ENCODE measurements at regions of chr4 and their contacts with region 1.

Region 1: DNA sequence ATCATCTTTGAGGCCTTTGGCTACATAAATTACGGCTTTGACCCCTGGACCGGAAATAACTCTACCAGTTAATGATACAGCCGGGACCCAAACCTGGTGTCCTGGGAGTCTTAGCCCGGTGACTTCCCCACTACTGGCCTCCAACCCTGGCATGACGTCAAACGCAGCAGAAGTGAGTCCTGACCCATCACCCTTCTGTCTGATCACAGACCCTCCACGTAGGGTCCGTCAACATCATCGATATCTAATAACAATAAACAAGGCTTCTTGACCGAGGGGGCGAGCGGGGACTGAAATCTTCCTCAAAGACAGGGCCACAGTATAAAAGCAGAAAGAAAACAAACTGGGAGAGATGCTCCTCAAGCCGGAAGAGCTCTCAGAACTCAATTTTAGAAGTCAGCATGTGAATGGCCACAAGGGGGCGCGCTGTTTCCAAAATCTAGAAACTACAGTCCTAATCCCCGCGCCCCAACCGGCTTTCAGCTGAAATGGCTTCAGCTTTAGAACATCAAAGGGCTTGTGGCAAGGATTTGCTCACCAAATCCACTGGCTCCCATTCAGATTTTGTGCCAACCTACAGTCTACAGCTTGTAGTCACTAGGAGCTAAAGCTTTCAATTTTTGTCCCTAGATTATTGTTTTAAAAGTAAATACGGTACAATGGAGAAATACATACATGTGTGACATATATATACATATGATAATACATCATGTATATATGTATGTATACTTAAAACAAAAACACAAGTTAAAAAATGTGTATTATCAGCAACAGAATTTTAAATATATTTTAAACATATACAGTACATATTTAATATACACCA is 46.4 kb upstream of the ENPP6 start:
- DNase-seq: peak; percentile 98
- ATAC-seq: peak; percentile 57
- H3K4me3 Mint-ChIP-seq: peak overlapping the region; percentile 2
- H3K27ac Mint-ChIP-seq: peak overlapping the region; percentile 41
- H3K4me1 Mint-ChIP-seq: peaks cover 47% of the 10 kb centered on the region
- H3K27me3 Mint-ChIP-seq: no peaks in the 10 kb centered on the region

Region 2: DNA sequence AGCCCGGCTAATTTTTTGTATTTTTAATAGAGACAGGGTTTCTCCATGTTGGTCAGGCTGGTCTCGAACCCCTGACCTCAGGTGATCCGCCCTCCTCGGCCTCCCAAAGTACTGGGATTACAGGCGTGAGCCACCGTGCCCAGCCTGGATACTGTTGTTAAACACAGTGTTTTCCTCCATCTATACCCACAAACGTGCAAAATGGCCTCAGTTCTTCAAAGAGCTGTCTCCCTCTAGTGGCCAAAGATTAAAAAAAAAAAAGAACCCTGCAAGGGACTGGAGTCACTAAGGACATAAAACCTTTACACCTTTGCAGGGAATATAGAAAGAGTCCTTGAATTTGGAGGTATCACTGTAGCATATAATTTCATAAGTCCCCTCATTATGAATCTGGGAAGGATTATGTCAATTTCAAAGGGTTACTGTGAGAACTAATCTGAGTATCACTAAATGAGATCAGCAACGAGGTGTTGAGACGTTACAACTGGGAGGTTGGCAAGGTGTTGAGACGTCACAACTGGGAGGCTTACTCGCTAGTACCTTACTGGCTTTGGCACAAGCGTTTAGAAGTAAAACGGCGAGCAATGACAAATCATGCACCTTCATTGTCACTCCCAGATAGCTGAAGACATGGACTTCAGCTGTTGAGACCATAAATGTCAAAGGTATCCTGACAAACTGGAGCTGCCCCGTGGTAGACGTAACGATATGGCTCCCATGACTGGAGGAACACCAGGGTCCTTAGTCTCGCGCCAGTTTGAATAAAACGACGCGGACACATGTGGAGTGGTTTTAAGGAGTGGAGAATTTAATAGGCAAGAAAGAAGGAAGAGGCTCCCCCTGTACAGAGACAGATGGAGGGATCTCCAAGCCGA is 13.1 kb before region 1 on chr4:
- CTCF ChIA-PET with region 1: interaction called, 41 read pairs
- POLR2A ChIA-PET with region 1: no interaction called
- intact Hi-C with region 1: no loop called
- DNase-seq: peak; percentile 36
- ATAC-seq: peak; percentile 80
- H3K4me3 Mint-ChIP-seq: no peak overlapping the region
- H3K27ac Mint-ChIP-seq: peak overlapping the region; percentile 53
- H3K4me1 Mint-ChIP-seq: peaks cover 14% of the 10 kb centered on the region
- H3K27me3 Mint-ChIP-seq: peaks cover 3% of the 10 kb centered on the region

Region 3: GRCh38 chr4:184310171-184310567 is 46.0 kb after region 1 on chr4:
- CTCF ChIA-PET with region 1: interaction called, 17 read pairs
- POLR2A ChIA-PET with region 1: no interaction called
- intact Hi-C with region 1: no loop called
- DNase-seq: peak; percentile 68
- ATAC-seq: peak; percentile 74
- H3K4me3 Mint-ChIP-seq: no peak overlapping the region
- H3K27ac Mint-ChIP-seq: peak overlapping the region; percentile 55
- H3K4me1 Mint-ChIP-seq: peaks cover 50% of the 10 kb centered on the region
- H3K27me3 Mint-ChIP-seq: no peaks in the 10 kb centered on the region

Region 4: DNA sequence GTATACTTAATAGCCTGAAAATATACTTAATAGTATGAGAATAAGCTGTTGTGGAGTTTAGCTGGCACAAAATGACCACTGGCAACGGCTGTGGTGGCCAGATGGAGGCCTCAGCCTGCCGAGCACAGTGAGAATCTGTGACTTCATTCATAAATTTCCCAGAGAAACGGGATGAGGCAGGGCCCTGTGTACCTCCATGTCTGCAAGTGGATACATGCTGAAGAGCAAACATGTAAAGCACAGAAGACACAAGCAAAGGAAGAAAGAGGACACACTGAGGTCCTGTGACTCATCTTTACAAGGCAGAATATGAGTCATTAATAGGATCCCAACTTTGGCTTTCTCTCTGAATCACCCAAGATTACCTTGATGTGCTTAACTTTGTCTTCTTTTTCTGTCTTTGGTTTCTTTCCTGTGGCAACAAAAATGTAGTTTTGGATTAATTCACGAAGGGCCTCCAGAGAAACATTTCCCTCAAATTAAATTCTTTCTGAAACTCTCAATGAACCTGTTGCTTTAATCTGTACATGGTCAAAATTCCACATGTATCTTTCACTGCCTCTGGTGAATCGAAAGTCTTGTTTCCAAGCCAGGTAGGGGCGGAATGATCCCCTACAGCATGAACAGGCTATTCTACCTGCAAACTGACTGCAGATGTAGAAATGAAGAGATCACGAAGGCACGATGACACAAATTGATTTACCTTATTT is 153.8 kb after region 1 on chr4:
- CTCF ChIA-PET with region 1: interaction called, 7 read pairs
- POLR2A ChIA-PET with region 1: interaction called, 3 read pairs
- intact Hi-C with region 1: loop called (anchors 1 kb)
- DNase-seq: peak; percentile 22
- ATAC-seq: peak; percentile 73
- H3K4me3 Mint-ChIP-seq: no peak overlapping the region
- H3K27ac Mint-ChIP-seq: peak overlapping the region; percentile 64
- H3K4me1 Mint-ChIP-seq: peaks cover 90% of the 10 kb centered on the region
- H3K27me3 Mint-ChIP-seq: no peaks in the 10 kb centered on the region

Region 5: GRCh38 chr4:184575306-184575705 is 311.2 kb after region 1 on chr4:
- CTCF ChIA-PET with region 1: interaction called, 5 read pairs
- POLR2A ChIA-PET with region 1: no interaction called
- intact Hi-C with region 1: loop called (anchors 2 to 5 kb)
- DNase-seq: no peak
- ATAC-seq: peak; percentile 67
- H3K4me3 Mint-ChIP-seq: no peak overlapping the region
- H3K27ac Mint-ChIP-seq: peak overlapping the region; percentile 47
- H3K4me1 Mint-ChIP-seq: peaks cover 22% of the 10 kb centered on the region
- H3K27me3 Mint-ChIP-seq: no peaks in the 10 kb centered on the region

Region 6: GRCh38 chr4:184635381-184635780 is 371.3 kb after region 1 on chr4:
- CTCF ChIA-PET with region 1: interaction called, 12 read pairs
- POLR2A ChIA-PET with region 1: no interaction called
- intact Hi-C with region 1: no loop called
- DNase-seq: no peak
- ATAC-seq: no peak
- H3K4me3 Mint-ChIP-seq: no peak overlapping the region
- H3K27ac Mint-ChIP-seq: no peak overlapping the region
- H3K4me1 Mint-ChIP-seq: peaks cover 13% of the 10 kb centered on the region
- H3K27me3 Mint-ChIP-seq: no peaks in the 10 kb centered on the region

Region 7: GRCh38 chr4:184825896-184826690 is 562.0 kb after region 1 on chr4 and contains the start of gene ACSL1:
- CTCF ChIA-PET with region 1: no interaction called
- POLR2A ChIA-PET with region 1: no interaction called
- intact Hi-C with region 1: loop called (anchors 10 kb)
- DNase-seq: peak; percentile 88
- ATAC-seq: peak; percentile 82
- H3K4me3 Mint-ChIP-seq: peak within 1 kb of the TSS; percentile 87
- H3K27ac Mint-ChIP-seq: peak within 1 kb of the TSS; percentile 89
- H3K4me1 Mint-ChIP-seq: peaks cover 34% of the 10 kb centered on the region
- H3K27me3 Mint-ChIP-seq: no peaks in the 10 kb centered on the region
- total RNA-seq, gene ACSL1: 17.1 to 17.2 TPM

Region 8: GRCh38 chr4:184983672-184984356 is 719.7 kb after region 1 on chr4:
- CTCF ChIA-PET with region 1: no interaction called
- POLR2A ChIA-PET with region 1: no interaction called
- intact Hi-C with region 1: no loop called
- DNase-seq: peak; percentile 77
- ATAC-seq: peak; percentile 94
- H3K4me3 Mint-ChIP-seq: no peak overlapping the region
- H3K27ac Mint-ChIP-seq: no peak overlapping the region
- H3K4me1 Mint-ChIP-seq: no peaks in the 10 kb centered on the region
- H3K27me3 Mint-ChIP-seq: no peaks in the 10 kb centered on the region